ENCODE measurements at regions of chr4 and their contacts with region 1.

Region 1: DNA sequence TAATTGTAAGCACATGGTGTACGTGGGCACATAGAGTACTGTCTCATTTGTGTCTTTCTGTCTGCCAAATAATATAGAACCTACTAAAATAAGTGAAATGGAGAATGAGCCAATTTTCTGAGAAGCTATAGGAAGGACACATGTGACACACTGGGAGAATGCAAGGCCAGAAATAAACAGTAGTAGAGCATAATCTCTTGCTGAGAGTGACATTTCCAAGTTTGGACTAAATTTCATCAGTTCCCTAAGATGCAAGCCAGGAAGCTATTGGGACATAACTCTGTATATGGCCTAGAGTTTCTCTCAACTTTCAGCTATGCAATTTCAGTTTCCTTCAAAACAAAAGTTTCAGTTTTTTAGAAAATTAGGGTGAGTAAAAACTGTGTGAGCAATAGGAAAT is 638.7 kb downstream of the PCDH18 start:
- DNase-seq: no peak
- H3K4me3 ChIP-seq: no peak overlapping the region
- H3K27ac ChIP-seq: no peak overlapping the region
- H3K4me1 ChIP-seq: no peaks in the 10 kb centered on the region
- H3K27me3 ChIP-seq: no peaks in the 10 kb centered on the region
- CTCF ChIP-seq: no peak
- EP300 ChIP-seq: no peak
- POLR2A ChIP-seq: no peak

Region 2: GRCh38 chr4:135744928-135745327 is 1148.6 kb before region 1 on chr4:
- in situ Hi-C with region 1: no loop called
- intact Hi-C with region 1: loop called (anchors 5 kb)
- DNase-seq: no peak
- H3K4me3 ChIP-seq: no peak overlapping the region
- H3K27ac ChIP-seq: no peak overlapping the region
- H3K4me1 ChIP-seq: no peaks in the 10 kb centered on the region
- H3K27me3 ChIP-seq: no peaks in the 10 kb centered on the region
- CTCF ChIP-seq: no peak
- EP300 ChIP-seq: no peak
- POLR2A ChIP-seq: no peak

Measured in transverse colon (tissue), 4 donors.